Pancreas (tissue), 10 donors: ENCODE measurements at regions of chr9 and their contacts with region 1.

Region 1: GRCh38 chr9:106127771-106128170 is 433.4 kb downstream of the TMEM38B start:
- DNase-seq: no peak
- ATAC-seq: no peak
- H3K4me3 ChIP-seq: no peak overlapping the region
- H3K27ac ChIP-seq: no peak overlapping the region
- H3K4me1 ChIP-seq: no peaks in the 10 kb centered on the region
- H3K27me3 ChIP-seq: no peaks in the 10 kb centered on the region
- CTCF ChIP-seq: no peak

Region 2: DNA sequence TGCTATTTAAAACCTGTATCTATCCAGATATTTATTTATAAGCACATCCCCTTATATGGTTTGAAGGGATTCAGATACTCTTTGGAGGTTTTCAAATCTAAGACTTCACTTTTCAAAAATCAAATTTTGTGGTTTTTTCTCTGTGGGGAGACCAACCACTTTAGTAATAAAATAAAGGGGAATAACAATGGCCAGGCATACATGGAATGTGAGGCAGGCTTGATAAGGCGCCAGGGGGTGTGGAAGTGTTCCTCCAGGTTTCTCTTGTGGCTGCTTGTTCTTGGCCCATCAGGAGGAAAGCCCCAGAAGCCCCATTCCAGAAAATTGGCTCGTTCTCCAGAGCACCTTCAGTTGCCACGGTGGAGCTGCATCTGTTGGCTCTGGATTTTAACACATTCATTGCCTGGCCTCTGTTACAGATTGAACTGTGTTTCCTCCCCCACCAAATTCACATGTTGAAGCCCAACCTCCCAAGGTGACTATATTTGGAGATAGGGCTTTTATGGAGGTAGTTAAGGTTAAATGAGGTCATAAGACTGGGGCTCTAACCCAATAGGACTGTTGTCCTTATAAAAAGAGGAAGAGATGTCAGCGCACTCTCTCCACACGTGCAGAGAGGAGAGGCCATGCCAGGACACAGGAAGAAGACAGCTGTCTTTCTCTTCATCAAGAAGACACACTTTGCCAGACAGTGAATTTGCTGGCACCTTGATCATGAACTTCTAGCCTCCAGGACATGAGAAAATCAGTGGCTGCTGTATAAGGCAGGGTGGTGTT is 237.5 kb before region 1 on chr9:
- intact Hi-C with region 1: loop called in 1 of 3 experiments (anchors 10 kb)
- DNase-seq: no peak
- ATAC-seq: no peak
- H3K4me3 ChIP-seq: no peak overlapping the region
- H3K27ac ChIP-seq: no peak overlapping the region
- H3K4me1 ChIP-seq: no peaks in the 10 kb centered on the region
- H3K27me3 ChIP-seq: no peaks in the 10 kb centered on the region
- CTCF ChIP-seq: no peak